ENCODE measurements at regions of chr18 and their contacts with region 1.

Region 1: GRCh38 chr18:24726727-24727492 is 266.5 kb downstream of the HRH4 start:
- H3K4me3 ChIP-seq: no peak overlapping the region
- H3K27ac ChIP-seq: no peak overlapping the region
- H3K4me1 ChIP-seq: no peaks in the 10 kb centered on the region
- CTCF ChIP-seq: peak; percentile 52; the same call in 1 of the 2 replicates

Region 2: DNA sequence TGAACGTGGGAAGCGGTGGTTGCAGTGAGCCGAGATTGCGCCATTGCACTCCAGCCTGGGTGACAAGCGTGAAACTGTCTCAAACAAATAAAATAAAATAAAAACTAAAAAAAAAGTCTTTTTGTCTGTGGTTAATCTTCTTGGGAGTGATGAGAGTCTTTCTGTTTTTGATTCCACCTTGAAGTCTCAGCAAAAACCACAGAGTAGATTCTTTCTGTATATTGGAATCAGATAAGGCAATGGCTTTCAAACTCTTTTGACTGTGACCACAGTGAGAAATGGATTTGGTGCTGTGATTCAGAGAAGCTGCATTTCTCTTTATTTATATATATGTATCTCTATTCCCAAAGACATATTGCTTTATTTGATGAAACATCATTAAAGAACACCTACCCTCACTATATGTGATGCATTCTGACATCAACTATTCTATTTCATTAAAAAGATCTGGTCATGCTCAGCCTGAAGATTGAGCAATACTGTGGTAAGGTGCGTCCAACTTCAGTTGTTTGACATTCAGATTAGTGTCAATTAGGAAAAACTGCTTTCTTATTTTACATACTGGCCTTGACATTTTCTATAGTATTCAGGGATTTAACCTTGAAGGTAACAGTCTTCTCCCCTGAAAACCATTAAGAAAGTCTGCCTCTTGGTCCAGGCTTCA is 250.9 kb before region 1 on chr18:
- CTCF ChIA-PET with region 1: no interaction called
- POLR2A ChIA-PET with region 1: no interaction called
- H3K4me3 ChIP-seq: no peak overlapping the region
- H3K27ac ChIP-seq: no peak overlapping the region
- H3K4me1 ChIP-seq: no peaks in the 10 kb centered on the region
- CTCF ChIP-seq: no peak

Region 3: GRCh38 chr18:24553571-24554285 is 173.2 kb before region 1 on chr18:
- CTCF ChIA-PET with region 1: interaction called, 117 read pairs
- POLR2A ChIA-PET with region 1: no interaction called
- H3K4me3 ChIP-seq: no peak overlapping the region
- H3K27ac ChIP-seq: no peak overlapping the region
- H3K4me1 ChIP-seq: no peaks in the 10 kb centered on the region
- CTCF ChIP-seq: no peak

Region 4: GRCh38 chr18:24584813-24585212 is 142.1 kb before region 1 on chr18:
- CTCF ChIA-PET with region 1: interaction called, 10 read pairs
- POLR2A ChIA-PET with region 1: no interaction called
- H3K4me3 ChIP-seq: no peak overlapping the region
- H3K27ac ChIP-seq: no peak overlapping the region
- H3K4me1 ChIP-seq: no peaks in the 10 kb centered on the region
- CTCF ChIP-seq: no peak

Region 5: GRCh38 chr18:24600076-24600654 is 126.7 kb before region 1 on chr18:
- CTCF ChIA-PET with region 1: interaction called, 92 read pairs
- POLR2A ChIA-PET with region 1: interaction called, 3 read pairs
- H3K4me3 ChIP-seq: no peak overlapping the region
- H3K27ac ChIP-seq: no peak overlapping the region
- H3K4me1 ChIP-seq: no peaks in the 10 kb centered on the region
- CTCF ChIP-seq: peak; percentile 21; the same call in 1 of the 2 replicates

Region 6: GRCh38 chr18:24964216-24964615 is 237.3 kb after region 1 on chr18:
- CTCF ChIA-PET with region 1: no interaction called
- POLR2A ChIA-PET with region 1: no interaction called
- H3K4me3 ChIP-seq: no peak overlapping the region
- H3K27ac ChIP-seq: no peak overlapping the region
- H3K4me1 ChIP-seq: no peaks in the 10 kb centered on the region
- CTCF ChIP-seq: 0 out of 2 replicates have a peak, but pooled peaks have one; percentile 16

Measured in HEK293 (cell line).